Dorsolateral prefrontal cortex (tissue), 120 donors: ENCODE measurements at regions of chr10 and their contacts with region 1.

Region 1: DNA sequence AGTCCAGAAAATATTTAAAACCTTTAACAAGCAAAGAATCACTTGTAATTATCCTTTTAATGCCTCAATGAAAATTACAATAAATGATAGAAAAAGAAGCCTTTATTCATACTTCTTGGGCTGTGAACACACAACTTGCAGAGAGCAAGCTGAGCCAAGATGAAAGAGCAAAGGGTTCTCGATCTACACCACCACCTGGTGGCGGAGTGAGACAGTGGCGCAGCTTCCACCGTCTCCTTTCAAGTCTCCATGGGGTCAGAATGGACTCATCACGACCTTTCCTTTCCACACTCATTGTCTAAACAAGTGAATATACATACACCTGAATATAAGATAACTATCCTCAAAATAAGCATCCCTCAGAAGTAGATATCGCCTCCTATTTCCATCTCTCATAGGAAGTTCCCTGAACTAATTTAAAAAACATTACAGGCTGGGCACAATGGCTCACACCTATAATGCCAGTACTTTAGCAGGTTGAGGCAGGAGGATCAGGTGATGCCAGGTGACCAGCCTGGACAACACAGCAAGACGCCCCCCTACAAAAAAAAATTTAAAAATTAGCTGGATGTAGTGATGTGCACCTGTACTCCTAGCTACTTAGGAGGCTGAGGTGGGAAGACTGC is 40.7 kb downstream of the ATE1 start:
- DNase-seq: peak; percentile 10 to 79 (median 68)
- H3K4me3 ChIP-seq: no peak overlapping the region
- H3K27ac ChIP-seq: peak overlapping the region in 6 of 59 donors; percentile 4 to 25 (median 17)
- H3K27me3 ChIP-seq: no peaks in the 10 kb centered on the region
- CTCF ChIP-seq: peak; percentile 61 to 93 (median 85)

Region 2: DNA sequence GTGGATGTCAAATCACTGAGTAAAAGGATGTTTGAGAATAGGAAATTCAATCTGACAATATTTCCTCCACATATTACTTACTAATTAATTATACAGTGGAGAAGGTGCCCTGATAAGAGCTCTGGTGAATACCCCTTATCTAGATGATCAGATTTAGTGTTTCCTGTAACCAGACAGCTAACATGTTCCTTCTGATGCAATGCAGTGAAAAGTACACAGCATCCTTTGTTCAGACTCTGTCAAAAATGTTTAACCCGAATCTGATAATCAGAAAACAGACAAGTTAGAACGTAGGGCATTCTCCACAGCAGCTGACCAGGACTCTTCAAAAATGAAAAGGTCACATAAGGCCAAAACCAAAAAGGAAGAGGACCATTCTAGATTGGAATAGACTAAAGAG is 989.8 kb before region 1 on chr10:
- intact Hi-C with region 1: no loop called
- DNase-seq: no peak
- H3K4me3 ChIP-seq: no peak overlapping the region
- H3K27ac ChIP-seq: no peak overlapping the region
- H3K27me3 ChIP-seq: no peaks in the 10 kb centered on the region
- CTCF ChIP-seq: no peak

Region 3: GRCh38 chr10:121734589-121735045 is 152.5 kb before region 1 on chr10:
- intact Hi-C with region 1: loop called (anchors 10 kb)
- DNase-seq: peak in 2 of 10 donors; percentile 7 to 56
- H3K4me3 ChIP-seq: peak overlapping the region in 52 of 59 donors; percentile 8 to 61 (median 42)
- H3K27ac ChIP-seq: peak overlapping the region in 8 of 59 donors; percentile 5 to 60 (median 16)
- H3K27me3 ChIP-seq: no peaks in the 10 kb centered on the region
- CTCF ChIP-seq: peak; percentile 62 to 89 (median 83)

Region 4: GRCh38 chr10:121823993-121824463 is 63.1 kb before region 1 on chr10:
- intact Hi-C with region 1: loop called in 1 of 2 experiments (anchors 10 kb)
- DNase-seq: no peak
- H3K4me3 ChIP-seq: no peak overlapping the region
- H3K27ac ChIP-seq: peak overlapping the region in 5 of 59 donors; percentile 4 to 53 (median 16)
- H3K27me3 ChIP-seq: no peaks in the 10 kb centered on the region
- CTCF ChIP-seq: peak; percentile 50 to 82 (median 68)

Region 5: GRCh38 chr10:121959671-121960070 is 72.6 kb after region 1 on chr10:
- intact Hi-C with region 1: no loop called
- DNase-seq: no peak
- H3K4me3 ChIP-seq: no peak overlapping the region
- H3K27ac ChIP-seq: no peak overlapping the region
- H3K27me3 ChIP-seq: no peaks in the 10 kb centered on the region
- CTCF ChIP-seq: no peak